ENCODE measurements at regions of chr6 and their contacts with region 1.

Region 1: GRCh38 chr6:163667372-163668060 is 253.0 kb downstream of the QKI start:
- DNase-seq: no peak
- ATAC-seq: peak; percentile 89
- H3K4me3 Mint-ChIP-seq: peak overlapping the region; percentile 73
- H3K27ac Mint-ChIP-seq: peak overlapping the region; percentile 92
- H3K4me1 Mint-ChIP-seq: peaks cover 27% of the 10 kb centered on the region
- H3K27me3 Mint-ChIP-seq: no peaks in the 10 kb centered on the region
- CTCF ChIP-seq: no peak

Region 2: GRCh38 chr6:163001330-163001729 is 666.2 kb before region 1 on chr6:
- CTCF ChIA-PET with region 1: no interaction called
- POLR2A ChIA-PET with region 1: no interaction called
- intact Hi-C with region 1: no loop called
- DNase-seq: no peak
- ATAC-seq: no peak
- H3K4me3 Mint-ChIP-seq: no peak overlapping the region
- H3K27ac Mint-ChIP-seq: no peak overlapping the region
- H3K4me1 Mint-ChIP-seq: no peaks in the 10 kb centered on the region
- H3K27me3 Mint-ChIP-seq: no peaks in the 10 kb centered on the region
- CTCF ChIP-seq: no peak

Region 3: GRCh38 chr6:163460307-163460782 is 207.2 kb before region 1 on chr6:
- CTCF ChIA-PET with region 1: no interaction called
- POLR2A ChIA-PET with region 1: no interaction called
- intact Hi-C with region 1: loop called (anchors 5 kb)
- DNase-seq: no peak
- ATAC-seq: peak; percentile 87
- H3K4me3 Mint-ChIP-seq: peak overlapping the region; percentile 89
- H3K27ac Mint-ChIP-seq: peak overlapping the region; percentile 89
- H3K4me1 Mint-ChIP-seq: peaks cover 58% of the 10 kb centered on the region
- H3K27me3 Mint-ChIP-seq: no peaks in the 10 kb centered on the region
- CTCF ChIP-seq: no peak

Region 4: GRCh38 chr6:163572612-163573011 is 94.9 kb before region 1 on chr6:
- CTCF ChIA-PET with region 1: no interaction called
- POLR2A ChIA-PET with region 1: interaction called, 5 read pairs
- intact Hi-C with region 1: loop called (anchors 5 kb)
- DNase-seq: no peak
- ATAC-seq: no peak
- H3K4me3 Mint-ChIP-seq: no peak overlapping the region
- H3K27ac Mint-ChIP-seq: no peak overlapping the region
- H3K4me1 Mint-ChIP-seq: no peaks in the 10 kb centered on the region
- H3K27me3 Mint-ChIP-seq: no peaks in the 10 kb centered on the region
- CTCF ChIP-seq: no peak

Region 5: GRCh38 chr6:163637524-163637923 is 30.0 kb before region 1 on chr6:
- CTCF ChIA-PET with region 1: no interaction called
- POLR2A ChIA-PET with region 1: no interaction called
- intact Hi-C with region 1: loop called (anchors 2 kb)
- DNase-seq: no peak
- ATAC-seq: peak; percentile 64
- H3K4me3 Mint-ChIP-seq: no peak overlapping the region
- H3K27ac Mint-ChIP-seq: no peak overlapping the region
- H3K4me1 Mint-ChIP-seq: peaks cover 2% of the 10 kb centered on the region
- H3K27me3 Mint-ChIP-seq: peaks cover 4% of the 10 kb centered on the region
- CTCF ChIP-seq: no peak

Region 6: DNA sequence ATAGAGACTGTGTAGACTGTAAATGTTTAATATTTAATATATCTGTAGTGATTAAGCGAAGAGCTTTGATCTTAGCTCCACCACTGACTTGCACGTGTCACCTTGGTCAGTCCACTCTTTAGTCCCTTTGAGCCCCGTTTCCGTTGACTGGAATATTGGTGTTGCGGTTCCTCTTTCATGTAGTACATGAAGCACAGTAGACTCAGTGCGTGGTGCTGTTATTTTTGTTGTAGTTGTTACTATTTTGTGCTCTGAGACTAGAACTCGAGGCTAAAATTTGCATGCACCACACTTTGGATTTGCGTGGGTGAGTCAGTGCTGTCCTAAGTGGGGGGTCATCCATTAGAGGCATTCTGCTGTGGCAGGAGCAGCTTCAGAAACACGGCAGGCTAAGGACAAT is 38.4 kb after region 1 on chr6:
- CTCF ChIA-PET with region 1: interaction called, 4 read pairs
- POLR2A ChIA-PET with region 1: interaction called, 5 read pairs
- intact Hi-C with region 1: loop called (anchors 1 kb)
- DNase-seq: no peak
- ATAC-seq: peak; percentile 53
- H3K4me3 Mint-ChIP-seq: peak overlapping the region; percentile 15
- H3K27ac Mint-ChIP-seq: peak overlapping the region; percentile 68
- H3K4me1 Mint-ChIP-seq: peaks cover 100% of the 10 kb centered on the region
- H3K27me3 Mint-ChIP-seq: no peaks in the 10 kb centered on the region
- CTCF ChIP-seq: no peak

Region 7: GRCh38 chr6:163711615-163712565 is 44.4 kb after region 1 on chr6:
- CTCF ChIA-PET with region 1: interaction called, 4 read pairs
- POLR2A ChIA-PET with region 1: interaction called, 10 read pairs
- intact Hi-C with region 1: loop called (anchors 1 kb)
- DNase-seq: peak; percentile 48
- ATAC-seq: peak; percentile 72
- H3K4me3 Mint-ChIP-seq: peak overlapping the region; percentile 63
- H3K27ac Mint-ChIP-seq: peak overlapping the region; percentile 74
- H3K4me1 Mint-ChIP-seq: peaks cover 86% of the 10 kb centered on the region
- H3K27me3 Mint-ChIP-seq: no peaks in the 10 kb centered on the region
- CTCF ChIP-seq: no peak

Region 8: DNA sequence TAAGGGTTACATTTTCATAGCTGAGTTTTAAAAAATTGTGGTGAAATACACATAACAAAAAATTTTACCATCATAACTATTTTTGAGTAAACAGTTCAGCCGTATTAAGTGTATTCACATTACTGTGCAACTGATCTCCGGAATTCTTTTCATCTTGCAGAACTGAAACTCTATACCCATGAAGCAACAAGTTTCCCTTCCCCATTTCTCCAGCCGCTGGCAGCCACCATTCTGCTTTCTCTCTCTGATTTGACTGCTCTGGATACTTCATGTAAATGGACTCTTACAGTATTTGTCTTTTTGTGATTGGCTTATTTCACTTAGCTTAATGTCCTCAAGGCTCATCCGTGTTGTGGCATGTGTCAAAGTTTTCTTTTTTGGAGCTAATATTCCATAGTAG is 88.6 kb after region 1 on chr6:
- CTCF ChIA-PET with region 1: interaction called, 4 read pairs
- POLR2A ChIA-PET with region 1: interaction called, 12 read pairs
- intact Hi-C with region 1: loop called (anchors 1 kb)
- DNase-seq: peak; percentile 55
- ATAC-seq: peak; percentile 96
- H3K4me3 Mint-ChIP-seq: peak overlapping the region; percentile 39
- H3K27ac Mint-ChIP-seq: peak overlapping the region; percentile 11
- H3K4me1 Mint-ChIP-seq: peaks cover 40% of the 10 kb centered on the region
- H3K27me3 Mint-ChIP-seq: peaks cover 5% of the 10 kb centered on the region
- CTCF ChIP-seq: no peak